PC-3 (cell line): ENCODE measurements at regions of chr6 and their contacts with region 1.

Region 1: GRCh38 chr6:108835218-108835850 is 12.9 kb upstream of the ARMC2 start:
- DNase-seq: peak; percentile 78
- ATAC-seq: peak; percentile 95
- H3K4me3 ChIP-seq: no peak overlapping the region
- H3K27ac ChIP-seq: no peak overlapping the region
- H3K4me1 ChIP-seq: 0 out of 2 replicates have a peak, but pooled peaks cover 6% of the 10 kb centered on the region
- H3K27me3 ChIP-seq: no peaks in the 10 kb centered on the region
- CTCF ChIP-seq: peak; percentile 82

Region 2: DNA sequence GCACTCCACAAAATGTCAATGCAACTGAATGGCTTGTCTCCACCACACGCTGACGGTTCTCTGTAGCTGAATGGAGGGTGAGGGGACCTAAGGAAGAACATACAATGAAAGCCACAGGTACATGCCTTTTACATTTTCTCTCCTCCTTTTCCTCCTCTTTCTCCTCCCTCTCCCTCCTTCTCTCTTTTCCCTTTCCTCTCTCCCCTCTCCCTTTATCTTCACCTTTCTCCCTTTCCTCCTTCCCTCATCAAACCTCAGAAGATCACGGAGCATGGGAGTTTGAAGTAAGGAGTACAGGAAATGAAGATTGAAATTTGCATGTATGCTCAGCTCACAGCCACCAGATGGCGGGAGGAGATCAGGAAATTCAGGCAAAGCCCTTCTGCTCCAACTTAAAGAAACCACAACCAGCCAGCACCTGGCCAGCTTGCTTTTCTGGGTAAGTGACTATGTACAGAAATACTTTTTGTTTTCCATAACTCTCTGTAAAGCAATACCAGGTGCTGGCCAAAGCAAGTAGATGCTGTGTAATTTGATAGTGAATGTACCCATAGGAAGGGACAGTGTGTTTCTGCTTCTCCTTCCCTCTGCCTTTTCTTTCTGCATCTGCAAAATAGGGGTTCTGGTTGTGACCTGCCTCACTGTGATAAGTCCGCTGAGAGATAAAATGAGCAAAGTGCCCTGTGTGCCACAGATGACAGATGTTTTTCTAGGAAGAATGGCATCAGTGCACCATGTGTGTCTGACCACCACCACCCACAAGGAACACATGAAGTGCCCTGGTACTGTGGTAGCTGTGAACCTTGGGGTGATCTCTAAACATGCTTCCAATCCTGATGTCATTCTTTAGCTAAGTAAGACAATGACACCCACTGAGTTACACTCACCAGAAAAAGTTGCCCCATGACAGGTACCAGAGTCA is 293.2 kb before region 1 on chr6:
- CTCF ChIA-PET with region 1: no interaction called
- POLR2A ChIA-PET with region 1: no interaction called
- intact Hi-C with region 1: loop called (anchors 1 kb)
- DNase-seq: peak; percentile 76
- ATAC-seq: peak; percentile 71
- H3K4me3 ChIP-seq: peak overlapping the region; percentile 40; the same call in 1 of the 2 replicates
- H3K27ac ChIP-seq: no peak overlapping the region
- H3K4me1 ChIP-seq: 0 out of 2 replicates have a peak, but pooled peaks cover 4% of the 10 kb centered on the region
- H3K27me3 ChIP-seq: no peaks in the 10 kb centered on the region
- CTCF ChIP-seq: peak; percentile 85

Region 3: GRCh38 chr6:108896111-108896661 is 60.9 kb after region 1 on chr6:
- CTCF ChIA-PET with region 1: interaction called, 7 read pairs
- POLR2A ChIA-PET with region 1: no interaction called
- intact Hi-C with region 1: loop called (anchors 1 kb)
- DNase-seq: peak; percentile 38
- ATAC-seq: peak; percentile 31; the same call in 1 of the 2 replicates
- H3K4me3 ChIP-seq: no peak overlapping the region
- H3K27ac ChIP-seq: no peak overlapping the region
- H3K4me1 ChIP-seq: peaks cover 12% of the 10 kb centered on the region
- H3K27me3 ChIP-seq: no peaks in the 10 kb centered on the region
- CTCF ChIP-seq: no peak

Region 4: DNA sequence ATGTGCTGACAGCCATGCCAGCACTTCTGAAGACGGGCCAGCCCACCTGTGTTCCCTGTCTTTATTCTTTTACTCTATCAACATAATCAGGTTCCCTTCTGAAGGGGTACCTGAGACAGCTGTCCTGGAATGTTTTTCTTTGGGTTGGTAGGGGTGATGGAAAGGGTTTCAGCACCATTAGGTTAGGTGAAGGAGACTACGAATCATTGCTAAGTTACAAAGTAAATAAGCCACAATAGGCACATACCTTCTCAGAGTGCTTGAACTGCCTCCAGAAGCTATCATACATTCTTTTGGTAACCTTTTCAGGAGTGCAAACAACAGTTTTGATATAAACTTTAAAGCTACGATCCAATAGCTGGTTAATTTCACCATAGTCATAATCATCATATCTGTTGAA is 153.0 kb after region 1 on chr6:
- CTCF ChIA-PET with region 1: no interaction called
- POLR2A ChIA-PET with region 1: no interaction called
- intact Hi-C with region 1: no loop called
- DNase-seq: peak; percentile 25
- ATAC-seq: peak; percentile 58; the same call in 1 of the 2 replicates
- H3K4me3 ChIP-seq: no peak overlapping the region
- H3K27ac ChIP-seq: no peak overlapping the region
- H3K4me1 ChIP-seq: peaks cover 15% of the 10 kb centered on the region
- H3K27me3 ChIP-seq: no peaks in the 10 kb centered on the region
- CTCF ChIP-seq: no peak